Panc1 (cell line): ENCODE measurements at regions of chr18 and their contacts with region 1.

Region 1: DNA sequence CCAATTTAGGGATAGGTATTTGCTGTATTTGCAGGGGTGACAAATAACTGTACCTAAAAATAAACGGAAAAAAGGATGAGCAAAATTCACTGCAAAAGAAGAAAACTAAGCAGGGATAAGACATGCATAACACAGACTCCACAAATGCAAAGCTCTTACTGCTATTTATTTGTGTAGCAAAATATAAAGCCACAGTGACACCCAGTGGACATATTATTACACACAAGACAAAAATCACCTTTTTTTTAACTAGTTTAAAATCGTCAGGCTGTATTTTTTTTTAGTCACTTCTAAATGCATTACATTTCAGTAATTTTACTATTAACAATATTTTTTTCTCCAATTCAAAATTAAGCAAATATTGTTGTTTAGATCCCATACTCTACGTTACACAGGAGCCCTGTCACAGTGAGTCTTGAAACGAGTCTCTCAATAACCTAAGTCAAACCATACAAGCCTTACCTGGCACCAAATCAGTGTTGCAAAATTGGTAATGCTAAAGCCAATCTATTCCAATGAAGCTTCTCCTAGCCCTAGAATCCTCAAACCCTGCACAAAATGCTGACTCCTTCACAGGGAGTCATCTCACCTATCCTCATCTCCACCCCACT is 23.7 kb downstream of the METTL4 start:
- DNase-seq: peak; percentile 13
- ATAC-seq: no peak
- H3K4me3 ChIP-seq: no peak overlapping the region
- H3K27ac ChIP-seq: no peak overlapping the region
- H3K4me1 ChIP-seq: no peaks in the 10 kb centered on the region
- H3K27me3 ChIP-seq: no peaks in the 10 kb centered on the region
- CTCF ChIP-seq: peak; percentile 65; the same call in 1 of the 2 replicates

Region 2: GRCh38 chr18:845152-845819 is 1702.3 kb before region 1 on chr18:
- CTCF ChIA-PET with region 1: no interaction called
- POLR2A ChIA-PET with region 1: no interaction called
- in situ Hi-C with region 1: no loop called
- intact Hi-C with region 1: loop called (anchors 5 kb)
- DNase-seq: no peak
- ATAC-seq: peak; percentile 59
- H3K4me3 ChIP-seq: no peak overlapping the region
- H3K27ac ChIP-seq: no peak overlapping the region
- H3K4me1 ChIP-seq: peaks cover 11% of the 10 kb centered on the region
- H3K27me3 ChIP-seq: no peaks in the 10 kb centered on the region
- CTCF ChIP-seq: no peak

Region 3: GRCh38 chr18:864872-865273 is 1682.7 kb before region 1 on chr18:
- CTCF ChIA-PET with region 1: no interaction called
- POLR2A ChIA-PET with region 1: no interaction called
- in situ Hi-C with region 1: no loop called
- intact Hi-C with region 1: loop called (anchors 2 kb)
- DNase-seq: peak; percentile 60
- ATAC-seq: peak; percentile 97
- H3K4me3 ChIP-seq: no peak overlapping the region
- H3K27ac ChIP-seq: no peak overlapping the region
- H3K4me1 ChIP-seq: no peaks in the 10 kb centered on the region
- H3K27me3 ChIP-seq: peaks cover 6% of the 10 kb centered on the region
- CTCF ChIP-seq: peak; percentile 100

Region 4: DNA sequence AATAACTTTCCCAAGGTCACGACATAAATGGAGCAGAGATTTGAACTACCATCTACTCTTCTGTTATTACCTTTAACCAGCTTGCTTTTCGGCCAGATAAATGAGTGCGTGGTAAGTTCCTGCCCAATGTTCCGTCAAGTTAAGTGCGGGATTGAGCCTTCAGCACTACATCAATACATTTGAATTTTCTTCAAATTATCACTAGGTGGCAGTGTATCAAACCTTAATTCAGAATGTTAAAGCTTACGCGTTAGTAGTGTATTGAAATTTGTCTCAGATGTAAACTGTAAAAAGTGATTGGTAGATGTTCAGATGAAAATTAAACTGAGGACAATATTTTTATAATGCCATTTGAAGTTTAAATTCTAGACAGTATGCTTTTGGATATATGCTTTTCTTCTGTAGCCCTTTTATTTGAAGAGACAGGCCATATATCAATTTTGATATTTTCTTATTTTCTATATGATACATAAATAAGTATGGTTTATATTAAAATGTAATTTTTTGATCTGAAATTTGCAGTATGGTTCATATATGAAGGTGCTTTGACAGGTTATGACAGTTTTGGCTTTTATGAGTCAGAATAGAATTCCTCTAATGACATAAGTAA is 961.6 kb before region 1 on chr18:
- CTCF ChIA-PET with region 1: no interaction called
- POLR2A ChIA-PET with region 1: no interaction called
- in situ Hi-C with region 1: no loop called
- intact Hi-C with region 1: loop called (anchors 10 kb)
- DNase-seq: no peak
- ATAC-seq: peak; percentile 58; the same call in 1 of the 2 replicates
- H3K4me3 ChIP-seq: no peak overlapping the region
- H3K27ac ChIP-seq: no peak overlapping the region
- H3K4me1 ChIP-seq: no peaks in the 10 kb centered on the region
- H3K27me3 ChIP-seq: no peaks in the 10 kb centered on the region
- CTCF ChIP-seq: peak; percentile 52; the same call in 1 of the 2 replicates

Region 5: DNA sequence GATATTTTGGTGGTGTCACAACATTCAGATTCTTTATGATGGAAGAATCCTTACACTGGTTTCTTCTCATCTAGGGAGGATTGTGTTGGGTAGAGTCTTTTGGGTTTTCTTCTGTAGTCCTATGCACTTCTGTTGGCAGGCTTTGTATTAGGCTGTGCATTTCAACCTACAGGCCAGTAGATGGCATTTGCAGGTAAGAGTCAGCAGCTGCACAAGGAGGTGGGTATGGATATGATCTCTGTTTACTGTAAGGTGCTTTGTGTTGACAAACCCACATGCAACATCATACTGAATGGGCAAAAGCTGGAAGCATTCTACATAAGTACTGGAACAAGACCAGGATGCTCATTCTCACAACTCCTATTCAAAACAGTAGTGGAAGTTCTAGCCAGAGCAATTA is 633.1 kb before region 1 on chr18:
- CTCF ChIA-PET with region 1: no interaction called
- POLR2A ChIA-PET with region 1: no interaction called
- in situ Hi-C with region 1: no loop called
- intact Hi-C with region 1: loop called (anchors 10 kb)
- DNase-seq: no peak
- ATAC-seq: no peak
- H3K4me3 ChIP-seq: no peak overlapping the region
- H3K27ac ChIP-seq: no peak overlapping the region
- H3K4me1 ChIP-seq: no peaks in the 10 kb centered on the region
- H3K27me3 ChIP-seq: no peaks in the 10 kb centered on the region
- CTCF ChIP-seq: peak; percentile 20; the same call in 1 of the 2 replicates

Region 6: GRCh38 chr18:2111456-2111855 is 436.1 kb before region 1 on chr18:
- CTCF ChIA-PET with region 1: interaction called, 8 read pairs
- POLR2A ChIA-PET with region 1: no interaction called
- in situ Hi-C with region 1: no loop called
- intact Hi-C with region 1: loop called (anchors 10 kb)
- DNase-seq: no peak
- ATAC-seq: no peak
- H3K4me3 ChIP-seq: no peak overlapping the region
- H3K27ac ChIP-seq: no peak overlapping the region
- H3K4me1 ChIP-seq: no peaks in the 10 kb centered on the region
- H3K27me3 ChIP-seq: no peaks in the 10 kb centered on the region
- CTCF ChIP-seq: no peak

Region 7: DNA sequence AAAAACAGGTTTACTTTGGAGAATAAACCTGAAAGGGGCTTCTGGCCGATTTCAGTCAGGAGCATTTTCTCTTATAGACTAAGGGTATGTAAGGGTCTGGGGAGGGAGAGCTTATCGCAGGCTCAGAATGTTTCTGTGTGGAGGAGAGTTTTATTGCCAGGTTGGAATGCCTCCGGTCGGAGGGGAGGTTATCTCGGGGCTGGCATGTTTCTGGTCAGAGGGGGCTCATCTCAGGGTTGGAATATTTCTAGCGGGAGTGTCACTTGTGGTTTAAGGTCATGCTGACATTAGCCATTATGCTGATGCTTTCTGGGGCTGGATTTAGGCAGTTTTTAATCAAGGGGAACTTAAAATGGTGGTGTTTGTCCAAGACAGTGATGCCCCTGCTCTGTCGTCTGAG is 309.9 kb before region 1 on chr18:
- CTCF ChIA-PET with region 1: no interaction called
- POLR2A ChIA-PET with region 1: no interaction called
- in situ Hi-C with region 1: no loop called
- intact Hi-C with region 1: loop called (anchors 10 kb)
- DNase-seq: no peak
- ATAC-seq: no peak
- H3K4me3 ChIP-seq: no peak overlapping the region
- H3K27ac ChIP-seq: no peak overlapping the region
- H3K4me1 ChIP-seq: no peaks in the 10 kb centered on the region
- H3K27me3 ChIP-seq: no peaks in the 10 kb centered on the region
- CTCF ChIP-seq: no peak

Region 8: GRCh38 chr18:2706903-2707302 is 159.3 kb after region 1 on chr18:
- CTCF ChIA-PET with region 1: no interaction called
- POLR2A ChIA-PET with region 1: no interaction called
- in situ Hi-C with region 1: no loop called
- intact Hi-C with region 1: no loop called
- DNase-seq: no peak
- ATAC-seq: no peak
- H3K4me3 ChIP-seq: no peak overlapping the region
- H3K27ac ChIP-seq: no peak overlapping the region
- H3K4me1 ChIP-seq: no peaks in the 10 kb centered on the region
- H3K27me3 ChIP-seq: no peaks in the 10 kb centered on the region
- CTCF ChIP-seq: no peak